Activated T-helper 1 cell treated with anti-CD3 and anti-CD28 coated beads, Interleukin-12 subunit alpha, Interleukin-12 subunit beta, Interleukin-2, Interleukin-4 antibody, amounts not matched to agents 30 ng/mL and 10 ng/mL and 1 ng/mL, durations not matched to agents 14 hours and 24 hours and 36 hours (primary cell): ENCODE measurements at regions of chr6 and their contacts with region 1.

Region 1: DNA sequence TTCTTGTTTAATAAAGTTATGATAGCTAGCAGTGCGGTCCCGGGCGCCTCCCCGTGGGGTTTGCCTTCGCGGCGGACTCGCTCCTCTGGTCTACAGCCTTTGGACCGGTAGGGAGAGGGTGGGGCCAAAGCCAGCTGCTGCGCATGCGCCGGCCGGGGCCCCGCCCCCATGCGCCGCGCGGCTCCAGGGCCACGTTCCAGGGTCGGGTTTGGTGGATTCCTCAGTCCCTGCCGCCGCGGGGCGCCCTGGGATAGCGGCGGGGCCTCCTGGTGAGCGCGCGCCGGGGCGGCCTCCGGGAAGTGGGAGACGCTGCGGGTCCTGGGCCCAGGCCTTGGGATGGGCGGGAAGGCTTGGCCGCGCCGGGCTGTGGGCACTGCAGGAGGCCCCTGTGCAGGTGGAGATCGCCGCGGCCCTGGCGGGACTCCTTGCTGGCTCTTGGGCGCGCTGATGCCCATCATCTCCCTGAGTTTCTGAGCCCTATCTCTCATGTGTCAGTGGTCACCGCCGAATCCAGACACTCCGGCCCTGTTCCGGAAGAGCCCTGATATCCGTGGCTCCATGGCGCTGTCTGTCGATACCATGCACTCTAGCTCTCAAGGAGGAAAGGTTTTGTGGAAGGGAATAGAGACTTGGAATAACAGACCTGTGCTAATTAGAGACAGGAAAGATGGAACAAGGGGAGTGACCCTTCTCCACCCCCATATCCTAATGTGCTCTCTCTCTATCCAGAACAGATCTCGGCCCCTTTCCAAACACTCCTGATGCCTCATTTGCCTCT is at the start of gene VARS2:
- DNase-seq: peak; percentile 88
- H3K4me3 Mint-ChIP-seq: peak within 1 kb of the TSS; percentile 94
- H3K27ac Mint-ChIP-seq: peak within 1 kb of the TSS; percentile 97
- H3K4me1 Mint-ChIP-seq: peaks cover 40% of the 10 kb centered on the region
- H3K27me3 Mint-ChIP-seq: no peaks in the 10 kb centered on the region
- total RNA-seq, gene VARS2: 74.0 and 76.0 TPM in 2 replicates

Region 2: GRCh38 chr6:30678964-30679726 is 235.1 kb before region 1 on chr6:
- intact Hi-C with region 1: loop called (anchors 2 kb)
- DNase-seq: peak; percentile 85
- H3K4me3 Mint-ChIP-seq: peak overlapping the region; percentile 94
- H3K27ac Mint-ChIP-seq: peak overlapping the region; percentile 90
- H3K4me1 Mint-ChIP-seq: peaks cover 26% of the 10 kb centered on the region
- H3K27me3 Mint-ChIP-seq: no peaks in the 10 kb centered on the region

Region 3: GRCh38 chr6:30828027-30828960 is 86.0 kb before region 1 on chr6:
- intact Hi-C with region 1: loop called (anchors 1 kb)
- DNase-seq: peak; percentile 66
- H3K4me3 Mint-ChIP-seq: peak overlapping the region; percentile 96
- H3K27ac Mint-ChIP-seq: peak overlapping the region; percentile 98
- H3K4me1 Mint-ChIP-seq: peaks cover 65% of the 10 kb centered on the region
- H3K27me3 Mint-ChIP-seq: no peaks in the 10 kb centered on the region

Region 4: GRCh38 chr6:31042806-31043205 is 128.5 kb after region 1 on chr6:
- intact Hi-C with region 1: loop called (anchors 1 kb)
- DNase-seq: peak; percentile 9
- H3K4me3 Mint-ChIP-seq: no peak overlapping the region
- H3K27ac Mint-ChIP-seq: no peak overlapping the region
- H3K4me1 Mint-ChIP-seq: peaks cover 7% of the 10 kb centered on the region
- H3K27me3 Mint-ChIP-seq: peaks cover 18% of the 10 kb centered on the region

Region 5: GRCh38 chr6:31068669-31069340 is 154.5 kb after region 1 on chr6:
- intact Hi-C with region 1: loop called (anchors 1 kb)
- DNase-seq: peak; percentile 53
- H3K4me3 Mint-ChIP-seq: no peak overlapping the region
- H3K27ac Mint-ChIP-seq: no peak overlapping the region
- H3K4me1 Mint-ChIP-seq: no peaks in the 10 kb centered on the region
- H3K27me3 Mint-ChIP-seq: no peaks in the 10 kb centered on the region

Region 6: DNA sequence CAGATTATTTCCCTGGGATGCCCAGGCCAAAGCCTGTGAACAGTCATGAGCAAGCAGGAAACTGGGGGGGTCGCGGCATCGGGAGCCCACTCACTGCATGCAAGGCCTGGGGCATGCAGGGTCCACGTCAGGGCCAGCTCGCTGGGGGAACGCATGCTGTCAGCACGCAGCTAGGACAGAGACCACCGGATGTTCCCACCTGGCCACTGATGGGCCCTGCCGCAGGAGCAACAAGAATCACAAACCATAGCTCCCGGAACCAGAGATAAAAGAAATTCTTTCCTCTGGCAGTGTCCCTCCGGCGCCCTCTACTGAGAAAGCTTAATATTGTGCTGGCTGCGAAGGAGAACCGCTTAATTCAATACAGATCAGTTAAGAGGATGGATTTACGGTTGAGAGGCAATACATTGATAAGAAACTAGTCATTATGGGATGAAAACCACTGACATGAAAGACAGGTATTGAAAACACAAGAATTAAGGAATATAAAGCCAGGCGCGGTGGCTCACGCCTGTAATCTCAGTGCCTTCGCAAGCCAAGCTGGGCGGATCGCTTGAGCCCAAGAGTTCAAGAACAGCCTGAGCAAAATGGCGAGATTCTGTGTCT is 165.5 kb after region 1 on chr6:
- intact Hi-C with region 1: loop called (anchors 1 kb)
- DNase-seq: peak; percentile 58
- H3K4me3 Mint-ChIP-seq: no peak overlapping the region
- H3K27ac Mint-ChIP-seq: no peak overlapping the region
- H3K4me1 Mint-ChIP-seq: no peaks in the 10 kb centered on the region
- H3K27me3 Mint-ChIP-seq: peaks cover 17% of the 10 kb centered on the region

Region 7: DNA sequence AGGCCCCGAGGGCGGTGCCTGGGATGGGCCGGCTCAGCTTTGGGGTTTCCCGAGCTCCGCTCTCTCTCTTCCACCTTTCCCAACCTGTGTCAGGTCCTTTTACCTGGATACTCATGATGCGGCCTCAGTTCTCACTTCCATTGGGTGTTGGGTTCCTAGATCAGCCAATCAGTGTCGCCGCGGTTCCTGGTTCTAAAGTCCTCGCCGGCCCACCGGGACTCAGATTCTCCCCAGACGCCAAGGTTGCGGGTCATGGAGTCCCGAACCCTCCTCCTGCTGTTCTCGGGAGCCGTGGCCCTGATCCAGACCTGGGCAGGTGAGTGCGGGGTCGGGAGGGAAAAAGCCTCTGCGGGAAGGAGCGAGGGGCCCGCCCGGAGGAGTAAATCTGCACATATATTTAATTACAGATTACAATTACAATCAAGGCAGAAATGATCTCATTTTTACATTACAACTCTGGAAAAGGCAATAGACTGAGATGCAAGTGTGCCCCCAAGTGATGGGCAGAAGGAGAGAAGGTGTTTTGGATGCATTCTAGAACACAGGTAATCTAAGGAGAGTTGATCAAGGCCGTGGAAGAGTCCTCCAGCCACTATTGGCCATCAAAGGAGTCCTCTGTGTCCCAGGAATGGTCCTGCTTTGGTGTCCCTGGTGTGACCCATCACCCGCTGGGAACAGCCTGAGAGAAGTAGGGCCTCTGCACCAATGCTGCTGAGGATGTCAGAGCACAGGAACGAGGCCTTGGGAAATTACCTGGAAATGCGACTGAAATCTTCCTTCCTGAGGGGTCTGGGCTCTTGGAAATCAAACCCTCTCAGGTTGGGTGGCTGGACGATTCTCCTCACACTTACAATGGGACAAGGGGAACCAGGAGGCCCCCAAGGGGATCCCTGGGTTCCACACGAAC is 549.0 kb after region 1 on chr6:
- intact Hi-C with region 1: loop called (anchors 1 kb)
- DNase-seq: peak; percentile 90
- H3K4me3 Mint-ChIP-seq: peak overlapping the region; percentile 100
- H3K27ac Mint-ChIP-seq: peak overlapping the region; percentile 87
- H3K4me1 Mint-ChIP-seq: peaks cover 63% of the 10 kb centered on the region
- H3K27me3 Mint-ChIP-seq: peaks cover 9% of the 10 kb centered on the region